ENCODE measurements at regions of chr15 and their contacts with region 1.

Region 1: GRCh38 chr15:86624261-86625036 is 544.8 kb downstream of the AGBL1 start:
- DNase-seq: peak; percentile 74
- ATAC-seq: peak; percentile 99

Region 2: DNA sequence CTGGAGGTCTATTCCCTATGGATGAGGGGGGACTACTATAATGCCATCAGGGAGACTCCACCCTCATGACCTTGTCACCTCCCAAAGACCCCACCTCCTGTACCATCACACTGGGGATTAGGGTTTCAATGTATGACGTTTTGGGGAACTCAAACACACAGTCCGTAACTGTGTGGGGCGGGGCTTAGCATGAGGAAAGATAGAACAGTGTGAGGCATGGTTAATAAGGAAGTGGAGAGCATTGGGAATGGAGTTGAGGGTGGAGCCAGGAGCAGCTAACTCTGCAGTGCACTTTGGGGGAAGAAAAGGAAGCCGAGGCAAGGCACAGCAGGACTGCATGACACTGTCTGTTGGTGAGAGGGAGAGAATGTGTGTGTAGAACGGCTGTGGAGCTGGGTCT is 635.7 kb before region 1 on chr15:
- intact Hi-C with region 1: no loop called
- DNase-seq: no peak
- ATAC-seq: no peak

Region 3: GRCh38 chr15:86915811-86916331 is 291.4 kb after region 1 on chr15:
- intact Hi-C with region 1: loop called (anchors 10 kb)
- DNase-seq: no peak
- ATAC-seq: peak; percentile 63

Region 4: GRCh38 chr15:87498560-87498959 is 874.1 kb after region 1 on chr15:
- intact Hi-C with region 1: no loop called
- DNase-seq: no peak
- ATAC-seq: no peak

Region 5: GRCh38 chr15:88274553-88275460 is 1650.4 kb after region 1 on chr15:
- intact Hi-C with region 1: loop called (anchors 5 kb)
- DNase-seq: no peak
- ATAC-seq: peak; percentile 68

Measured in Right ventricle myocardium inferior (tissue), 1 donor.